ENCODE measurements at regions of chr6 and their contacts with region 1.

Region 1: DNA sequence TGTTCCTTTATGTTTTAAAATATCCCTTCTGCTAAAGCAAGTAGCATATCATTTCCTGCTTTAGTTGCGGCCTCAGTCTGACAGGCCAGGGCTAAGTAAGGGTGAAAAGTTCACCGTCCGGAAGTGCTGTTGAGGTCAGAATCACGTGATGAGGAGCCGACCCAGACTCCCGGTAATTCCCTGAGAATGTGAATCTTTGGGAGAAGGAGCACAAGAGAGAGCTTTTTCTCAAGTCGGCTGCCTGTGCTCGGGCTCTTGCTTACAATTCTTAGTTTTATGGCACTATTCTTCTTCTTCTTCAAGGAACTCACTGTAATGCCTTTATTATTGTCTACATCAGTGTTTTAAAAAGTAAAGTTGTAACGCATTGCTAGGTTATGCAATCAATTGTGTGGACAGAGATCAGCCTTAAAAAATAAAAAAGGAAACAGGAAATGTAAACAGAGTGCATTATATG is 309.3 kb downstream of the PRL start:
- DNase-seq: peak; percentile 51
- H3K4me3 ChIP-seq: no peak overlapping the region
- H3K27ac ChIP-seq: no peak overlapping the region
- H3K4me1 ChIP-seq: peaks cover 33% of the 10 kb centered on the region
- H3K27me3 ChIP-seq: no peaks in the 10 kb centered on the region
- CTCF ChIP-seq: no peak

Region 2: GRCh38 chr6:23334360-23334759 is 1346.8 kb after region 1 on chr6:
- CTCF ChIA-PET with region 1: no interaction called
- POLR2A ChIA-PET with region 1: interaction called, 14 read pairs
- intact Hi-C with region 1: no loop called
- DNase-seq: no peak
- H3K4me3 ChIP-seq: no peak overlapping the region
- H3K27ac ChIP-seq: no peak overlapping the region
- H3K4me1 ChIP-seq: no peaks in the 10 kb centered on the region
- H3K27me3 ChIP-seq: no peaks in the 10 kb centered on the region
- CTCF ChIP-seq: no peak